Transverse colon (tissue), 4 donors: ENCODE measurements at regions of chr15 and their contacts with region 1.

Region 1: DNA sequence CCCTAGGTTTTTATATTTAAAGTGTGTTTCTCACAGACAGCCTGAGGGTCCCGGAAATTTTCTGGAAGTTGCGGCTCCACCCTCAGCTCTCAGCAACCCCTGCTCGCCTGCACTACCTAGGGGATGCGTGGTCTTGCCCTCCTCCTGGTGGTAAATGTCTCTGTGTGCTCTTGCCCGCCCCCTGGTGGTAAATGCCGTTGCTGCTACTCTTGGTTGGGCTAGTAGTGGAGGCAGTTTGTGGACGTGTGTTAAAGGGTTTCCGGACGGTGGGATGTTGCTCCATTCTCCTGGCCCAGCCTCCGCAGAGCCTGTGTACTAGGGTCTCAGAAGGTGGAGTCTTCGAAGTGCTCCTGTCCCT is 27.4 kb downstream of the STOML1 start:
- DNase-seq: peak; percentile 86
- H3K4me3 ChIP-seq: peak overlapping the region in 1 of 4 donors; percentile 26
- H3K27ac ChIP-seq: peak overlapping the region in 2 of 4 donors; percentile 29 to 59
- H3K4me1 ChIP-seq: peaks cover 0 to 15% (median 7%) of the 10 kb centered on the region in 4 donors
- H3K27me3 ChIP-seq: peaks cover 5% of the 10 kb centered on the region
- CTCF ChIP-seq: peak; percentile 88 to 95 (median 93)
- EP300 ChIP-seq: no peak
- POLR2A ChIP-seq: no peak

Region 2: GRCh38 chr15:73560501-73561117 is 404.1 kb before region 1 on chr15:
- in situ Hi-C with region 1: no loop called
- intact Hi-C with region 1: no loop called
- DNase-seq: no peak
- H3K4me3 ChIP-seq: no peak overlapping the region
- H3K27ac ChIP-seq: no peak overlapping the region
- H3K4me1 ChIP-seq: peaks cover 0 to 5% (median 0%) of the 10 kb centered on the region in 4 donors
- H3K27me3 ChIP-seq: no peaks in the 10 kb centered on the region
- CTCF ChIP-seq: peak; percentile 34 to 61 (median 51)
- EP300 ChIP-seq: no peak
- POLR2A ChIP-seq: no peak

Region 3: GRCh38 chr15:73950831-73951561 is 13.7 kb before region 1 on chr15:
- in situ Hi-C with region 1: no loop called
- intact Hi-C with region 1: loop called (anchors 2 kb)
- DNase-seq: peak; percentile 85
- H3K4me3 ChIP-seq: no peak overlapping the region
- H3K27ac ChIP-seq: peak overlapping the region; percentile 82 to 95 (median 89)
- H3K4me1 ChIP-seq: peaks cover 8 to 19% (median 10%) of the 10 kb centered on the region in 4 donors
- H3K27me3 ChIP-seq: no peaks in the 10 kb centered on the region
- CTCF ChIP-seq: peak; percentile 48 to 63 (median 59)
- EP300 ChIP-seq: no peak
- POLR2A ChIP-seq: no peak

Region 4: GRCh38 chr15:74011610-74012009 is 46.9 kb after region 1 on chr15:
- in situ Hi-C with region 1: no loop called
- intact Hi-C with region 1: no loop called
- DNase-seq: peak; percentile 45
- H3K4me3 ChIP-seq: no peak overlapping the region
- H3K27ac ChIP-seq: peak overlapping the region; percentile 48 to 87 (median 58)
- H3K4me1 ChIP-seq: peaks cover 40 to 59% (median 42%) of the 10 kb centered on the region in 4 donors
- H3K27me3 ChIP-seq: no peaks in the 10 kb centered on the region
- CTCF ChIP-seq: no peak
- EP300 ChIP-seq: no peak
- POLR2A ChIP-seq: no peak